GM23248 (cell line): ENCODE measurements at regions of chr4 and their contacts with region 1.

Region 1: GRCh38 chr4:7802093-7802726 is 137.5 kb downstream of the AFAP1 start:
- DNase-seq: peak; percentile 91
- H3K4me3 ChIP-seq: no peak overlapping the region
- H3K27ac ChIP-seq: peak overlapping the region; percentile 39
- H3K4me1 ChIP-seq: peaks cover 37% of the 10 kb centered on the region
- H3K27me3 ChIP-seq: no peaks in the 10 kb centered on the region

Region 2: GRCh38 chr4:7381221-7381889 is 420.9 kb before region 1 on chr4:
- in situ Hi-C with region 1: no loop called
- DNase-seq: peak; percentile 64
- H3K4me3 ChIP-seq: no peak overlapping the region
- H3K27ac ChIP-seq: no peak overlapping the region
- H3K4me1 ChIP-seq: no peaks in the 10 kb centered on the region; the same call in 1 of the 2 replicates
- H3K27me3 ChIP-seq: peaks cover 50% of the 10 kb centered on the region

Region 3: GRCh38 chr4:7956311-7956808 is 154.2 kb after region 1 on chr4:
- in situ Hi-C with region 1: no loop called
- DNase-seq: peak; percentile 84
- H3K4me3 ChIP-seq: no peak overlapping the region
- H3K27ac ChIP-seq: peak overlapping the region; percentile 47
- H3K4me1 ChIP-seq: peaks cover 25% of the 10 kb centered on the region
- H3K27me3 ChIP-seq: no peaks in the 10 kb centered on the region

Region 4: GRCh38 chr4:7987148-7987989 is 185.2 kb after region 1 on chr4:
- in situ Hi-C with region 1: loop called (anchors 10 kb)
- DNase-seq: peak; percentile 82
- H3K4me3 ChIP-seq: no peak overlapping the region
- H3K27ac ChIP-seq: peak overlapping the region; percentile 74
- H3K4me1 ChIP-seq: peaks cover 14% of the 10 kb centered on the region
- H3K27me3 ChIP-seq: no peaks in the 10 kb centered on the region